Calu3 (cell line): ENCODE measurements at regions of chr1 and their contacts with region 1.

Region 1: DNA sequence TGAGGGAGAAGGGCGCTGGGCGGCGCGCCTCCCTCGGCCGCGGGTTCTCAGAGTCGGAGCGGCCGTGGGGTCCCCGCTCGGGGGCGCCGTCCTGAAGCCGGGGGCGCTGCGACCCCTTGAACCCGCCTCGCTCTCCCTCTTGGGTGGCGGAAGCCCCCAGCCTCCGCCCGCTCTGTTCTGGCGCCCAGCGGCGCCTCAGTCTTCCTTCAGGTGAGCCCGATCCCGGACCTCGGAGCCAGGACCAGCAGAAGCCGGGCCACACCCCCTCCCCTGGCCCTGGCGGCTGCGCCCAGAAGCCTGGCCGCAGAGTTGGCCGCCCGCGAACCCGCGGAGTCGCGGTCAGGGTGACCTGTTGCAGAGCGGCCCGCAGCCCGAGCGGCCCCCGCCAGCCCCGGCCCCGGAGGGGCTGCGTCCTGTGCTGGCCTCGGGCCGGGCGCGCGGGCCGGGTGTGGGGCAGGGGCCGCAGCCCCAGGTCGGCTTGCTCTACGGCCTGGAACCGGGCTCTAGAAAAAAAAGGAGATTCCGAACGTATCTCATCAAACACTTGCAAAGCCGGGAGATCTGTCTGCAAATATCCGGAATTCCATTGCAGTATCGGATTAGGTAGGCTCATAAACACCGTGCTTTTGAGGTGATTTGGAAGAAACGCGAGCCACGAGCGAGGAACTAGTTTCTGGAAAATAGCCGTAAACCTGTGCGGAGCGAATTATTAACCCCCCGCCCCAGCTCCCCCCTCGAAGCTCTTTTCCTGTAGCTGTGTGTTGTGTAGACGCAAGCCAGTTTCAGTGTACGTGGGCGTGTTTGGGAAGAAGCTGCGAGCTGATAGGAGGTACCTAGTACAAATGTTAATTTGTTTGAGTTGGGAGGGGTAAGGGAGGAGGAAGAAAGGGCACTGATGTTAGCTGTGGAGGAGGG is 816 bp downstream of the RALGPS2 start:
- DNase-seq: peak; percentile 84
- H3K4me3 Mint-ChIP-seq: peak overlapping the region; percentile 84
- H3K27ac Mint-ChIP-seq: peak overlapping the region; percentile 88
- H3K4me1 Mint-ChIP-seq: peaks cover 35% of the 10 kb centered on the region
- H3K27me3 Mint-ChIP-seq: no peaks in the 10 kb centered on the region
- CTCF ChIP-seq: no peak

Region 2: GRCh38 chr1:178607718-178608408 is 118.0 kb before region 1 on chr1:
- CTCF ChIA-PET with region 1: interaction called, 5 read pairs
- intact Hi-C with region 1: loop called (anchors 2 kb)
- DNase-seq: no peak
- H3K4me3 Mint-ChIP-seq: no peak overlapping the region
- H3K27ac Mint-ChIP-seq: peak overlapping the region; percentile 92
- H3K4me1 Mint-ChIP-seq: peaks cover 58% of the 10 kb centered on the region
- H3K27me3 Mint-ChIP-seq: no peaks in the 10 kb centered on the region
- CTCF ChIP-seq: no peak

Region 3: DNA sequence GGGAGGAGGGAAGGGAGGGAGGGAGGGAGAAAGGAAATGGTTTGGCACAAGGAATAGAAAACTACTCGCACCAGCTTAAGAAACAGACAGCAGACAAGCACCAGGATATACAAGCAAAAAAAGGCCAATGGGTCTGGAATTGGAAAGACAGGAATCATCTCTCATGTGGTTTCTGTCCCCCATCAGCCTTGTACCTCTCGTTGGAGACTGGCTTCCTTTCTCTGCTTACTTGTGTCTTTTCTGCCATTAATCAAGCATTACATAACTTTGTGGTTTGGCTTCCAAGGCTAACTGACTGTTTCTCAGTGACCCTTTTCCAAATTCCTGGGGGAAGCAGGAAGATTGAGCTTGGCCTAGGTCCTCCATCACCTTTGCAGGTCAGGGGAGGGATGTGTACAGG is 12.6 kb before region 1 on chr1:
- CTCF ChIA-PET with region 1: no interaction called
- intact Hi-C with region 1: no loop called
- DNase-seq: no peak
- H3K4me3 Mint-ChIP-seq: no peak overlapping the region
- H3K27ac Mint-ChIP-seq: no peak overlapping the region
- H3K4me1 Mint-ChIP-seq: no peaks in the 10 kb centered on the region
- H3K27me3 Mint-ChIP-seq: no peaks in the 10 kb centered on the region
- CTCF ChIP-seq: no peak

Region 4: GRCh38 chr1:178870944-178871343 is 145.1 kb after region 1 on chr1 and contains the start of gene ANGPTL1:
- CTCF ChIA-PET with region 1: interaction called, 4 read pairs
- intact Hi-C with region 1: loop called (anchors 5 kb)
- DNase-seq: no peak
- H3K4me3 Mint-ChIP-seq: peak within 1 kb of the TSS; percentile 6
- H3K27ac Mint-ChIP-seq: peak within 1 kb of the TSS; percentile 33
- H3K4me1 Mint-ChIP-seq: peaks cover 36% of the 10 kb centered on the region
- H3K27me3 Mint-ChIP-seq: no peaks in the 10 kb centered on the region
- CTCF ChIP-seq: no peak
- total RNA-seq, gene ANGPTL1: 0.35 and 0.59 TPM in 2 replicates